ENCODE measurements at regions of chr11 and their contacts with region 1.

Region 1: DNA sequence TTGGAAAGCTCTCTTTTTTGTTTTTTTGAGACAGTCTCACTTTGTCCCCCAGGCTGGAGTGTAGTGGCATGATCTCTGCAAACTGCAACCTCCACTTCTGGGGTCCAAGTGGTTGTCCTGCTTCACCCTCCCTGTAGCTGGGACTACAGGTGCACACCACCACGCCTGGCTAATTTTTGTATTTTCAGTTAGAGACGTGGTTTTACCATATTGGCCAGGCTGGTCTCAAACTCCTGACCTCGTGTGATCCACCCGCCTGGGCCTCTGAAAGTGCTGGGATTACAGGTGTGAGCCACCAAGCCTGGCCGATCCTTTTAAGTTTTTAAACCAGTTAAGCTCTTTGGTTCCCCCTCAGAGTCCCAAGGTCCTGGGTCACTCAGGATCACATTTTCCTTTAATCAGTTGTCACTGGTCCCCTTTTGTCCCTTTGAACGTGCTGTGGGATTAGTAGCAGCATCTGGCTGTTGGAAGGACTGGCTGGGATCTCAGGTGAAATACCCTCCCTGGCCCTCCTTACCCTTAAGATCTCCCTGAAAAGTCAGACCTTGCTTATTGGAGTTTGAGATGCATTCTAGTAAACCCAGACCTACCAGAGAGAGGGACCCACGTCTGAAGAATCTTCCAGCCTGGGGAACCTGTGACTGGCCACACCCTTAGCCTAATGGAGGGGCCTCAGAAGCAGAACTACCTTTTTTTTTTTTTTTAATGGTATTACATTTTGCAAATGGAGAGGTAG is 8.1 kb downstream of the MALAT1 start:
- DNase-seq: no peak
- ATAC-seq: peak; percentile 61
- H3K4me3 ChIP-seq: no peak overlapping the region
- H3K27ac ChIP-seq: peak overlapping the region; percentile 28
- H3K4me1 ChIP-seq: peaks cover 10% of the 10 kb centered on the region; the same call in 1 of the 2 replicates
- H3K27me3 ChIP-seq: no peaks in the 10 kb centered on the region
- CTCF ChIP-seq: no peak
- EP300 ChIP-seq: peak in 1 of 2 experiments; percentile 31; a peak in 1 of 4 replicates
- POLR2A ChIP-seq: peak; percentile 79
- RAD21 ChIP-seq: no peak

Region 2: DNA sequence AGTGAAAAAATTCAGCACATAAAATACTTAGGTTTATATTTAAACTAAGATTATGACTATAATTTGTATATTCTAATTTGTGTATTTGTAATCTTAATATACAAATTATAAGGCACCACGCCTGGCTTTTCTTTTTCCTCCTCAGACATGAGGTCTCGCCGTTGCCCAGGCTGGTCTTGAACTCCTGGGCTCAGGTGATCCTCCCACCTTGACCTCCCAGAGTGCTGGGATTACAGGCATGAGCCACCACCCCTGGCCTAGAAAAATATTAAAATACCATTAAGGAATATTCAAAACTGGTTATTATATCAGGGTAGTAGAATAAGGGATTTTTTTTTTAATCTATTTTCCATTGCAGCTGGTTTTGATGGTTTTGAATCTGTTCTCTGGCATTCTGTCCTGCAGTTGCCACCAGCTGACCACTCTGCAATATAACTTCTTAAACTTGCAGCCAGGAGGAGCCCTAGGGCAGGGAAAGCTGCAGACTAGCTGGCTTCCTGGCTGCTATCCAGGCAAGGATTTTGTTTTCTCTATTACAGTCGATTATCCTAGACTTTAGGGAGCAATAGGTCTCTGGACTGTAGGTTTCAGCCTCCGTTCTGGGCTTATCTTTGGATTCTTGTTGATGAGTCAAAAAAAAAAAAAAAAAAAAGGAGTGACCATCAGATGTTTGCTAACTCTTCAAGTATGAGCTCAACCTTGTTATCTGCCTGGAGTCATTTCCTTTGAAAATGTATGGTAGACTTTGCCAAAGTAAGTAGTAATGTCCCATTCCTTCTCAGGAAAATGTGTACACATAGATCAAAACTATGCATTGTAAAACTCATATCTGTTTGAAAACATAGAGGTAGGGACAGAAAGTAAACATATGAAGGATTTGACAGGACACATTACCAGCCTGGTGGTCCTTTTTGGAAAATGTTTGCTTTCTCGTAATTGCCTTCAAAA is 231.9 kb before region 1 on chr11:
- CTCF ChIA-PET with region 1: interaction called, 11 read pairs
- POLR2A ChIA-PET with region 1: no interaction called
- RAD21 ChIA-PET with region 1: interaction called, 9 read pairs
- SMC1A ChIA-PET with region 1: interaction called, 4 read pairs
- in situ Hi-C with region 1: no loop called
- intact Hi-C with region 1: no loop called
- DNase-seq: no peak
- ATAC-seq: peak; percentile 89
- H3K4me3 ChIP-seq: no peak overlapping the region
- H3K27ac ChIP-seq: no peak overlapping the region
- H3K4me1 ChIP-seq: peaks cover 6% of the 10 kb centered on the region; the same call in 1 of the 2 replicates
- H3K27me3 ChIP-seq: no peaks in the 10 kb centered on the region
- CTCF ChIP-seq: peak; percentile 68 to 94 (median 69)
- EP300 ChIP-seq: no peak
- POLR2A ChIP-seq: no peak
- RAD21 ChIP-seq: peak; percentile 90

Region 3: GRCh38 chr11:65366340-65366773 is 140.6 kb before region 1 on chr11:
- CTCF ChIA-PET with region 1: interaction called, 29 read pairs
- POLR2A ChIA-PET with region 1: interaction called, 6 read pairs
- RAD21 ChIA-PET with region 1: interaction called, 8 read pairs
- SMC1A ChIA-PET with region 1: interaction called, 18 read pairs
- in situ Hi-C with region 1: loop called (anchors 5 kb)
- intact Hi-C with region 1: loop called (anchors 1 kb)
- DNase-seq: no peak
- ATAC-seq: peak; percentile 42
- H3K4me3 ChIP-seq: no peak overlapping the region
- H3K27ac ChIP-seq: no peak overlapping the region
- H3K4me1 ChIP-seq: peaks cover 16% of the 10 kb centered on the region
- H3K27me3 ChIP-seq: no peaks in the 10 kb centered on the region; a peak in 1 of 4 replicates
- CTCF ChIP-seq: peak; percentile 74 to 79 (median 76)
- EP300 ChIP-seq: no peak
- POLR2A ChIP-seq: no peak
- RAD21 ChIP-seq: peak; percentile 94

Region 4: GRCh38 chr11:65382033-65382807 is 124.7 kb before region 1 on chr11 and contains the start of gene SLC25A45:
- CTCF ChIA-PET with region 1: interaction called, 16 read pairs
- POLR2A ChIA-PET with region 1: interaction called, 6 read pairs
- RAD21 ChIA-PET with region 1: interaction called, 8 read pairs
- SMC1A ChIA-PET with region 1: interaction called, 6 read pairs
- in situ Hi-C with region 1: no loop called
- intact Hi-C with region 1: no loop called
- DNase-seq: peak; percentile 84
- ATAC-seq: peak; percentile 86
- H3K4me3 ChIP-seq: peak within 1 kb of the TSS; percentile 90
- H3K27ac ChIP-seq: peak within 1 kb of the TSS; percentile 99
- H3K4me1 ChIP-seq: peaks cover 58% of the 10 kb centered on the region
- H3K27me3 ChIP-seq: no peaks in the 10 kb centered on the region
- CTCF ChIP-seq: peak; percentile 70 to 79 (median 71)
- EP300 ChIP-seq: peak in 1 of 2 experiments; percentile 24; a peak in 1 of 4 replicates
- POLR2A ChIP-seq: peak; percentile 78
- RAD21 ChIP-seq: peak; percentile 74
- polyA plus RNA-seq, gene SLC25A45: 4.1 to 9.7 TPM

Region 5: DNA sequence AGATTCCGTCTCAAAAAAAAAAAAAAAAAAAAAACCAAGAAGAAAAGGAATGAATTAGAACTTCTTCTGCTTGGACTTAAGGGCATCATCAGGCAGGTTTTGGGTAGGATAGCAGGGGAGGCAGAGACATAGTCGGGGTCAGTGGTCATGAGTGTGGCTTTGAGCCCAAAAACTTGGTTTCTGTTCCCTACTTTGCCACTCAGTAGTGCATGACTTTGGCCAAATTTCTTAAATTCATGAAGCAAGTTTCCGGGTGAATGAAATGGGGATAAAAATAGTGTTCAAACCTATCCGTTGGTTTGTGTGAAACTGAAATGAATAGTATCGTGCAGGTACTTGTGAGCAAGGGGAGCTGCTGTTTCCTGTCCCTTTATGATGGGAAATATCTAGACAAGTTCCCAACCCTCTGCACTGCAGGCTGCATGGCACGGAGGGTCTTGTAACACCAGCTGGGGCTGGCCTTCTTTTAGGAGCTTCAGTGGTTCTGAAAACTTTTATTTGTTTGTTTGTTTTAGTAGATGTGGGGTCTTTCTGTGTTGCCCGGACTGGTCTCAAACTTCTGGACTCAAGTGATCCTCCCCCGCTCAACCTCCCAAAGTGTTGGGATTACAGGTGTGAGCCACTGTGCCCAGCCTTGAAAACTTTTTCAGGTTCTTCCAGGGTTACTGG is 66.0 kb before region 1 on chr11:
- CTCF ChIA-PET with region 1: interaction called, 4 read pairs
- POLR2A ChIA-PET with region 1: interaction called, 13 read pairs
- RAD21 ChIA-PET with region 1: interaction called, 3 read pairs
- SMC1A ChIA-PET with region 1: interaction called, 3 read pairs
- in situ Hi-C with region 1: no loop called
- intact Hi-C with region 1: no loop called
- DNase-seq: peak; percentile 98
- ATAC-seq: peak; percentile 69
- H3K4me3 ChIP-seq: no peak overlapping the region
- H3K27ac ChIP-seq: peak overlapping the region; percentile 89
- H3K4me1 ChIP-seq: peaks cover 52% of the 10 kb centered on the region
- H3K27me3 ChIP-seq: no peaks in the 10 kb centered on the region
- CTCF ChIP-seq: no peak
- EP300 ChIP-seq: peak; percentile 81 to 84; a peak in 3 of 4 replicates
- POLR2A ChIP-seq: peak; percentile 47; the same call in 1 of the 2 replicates
- RAD21 ChIP-seq: no peak

Region 6: DNA sequence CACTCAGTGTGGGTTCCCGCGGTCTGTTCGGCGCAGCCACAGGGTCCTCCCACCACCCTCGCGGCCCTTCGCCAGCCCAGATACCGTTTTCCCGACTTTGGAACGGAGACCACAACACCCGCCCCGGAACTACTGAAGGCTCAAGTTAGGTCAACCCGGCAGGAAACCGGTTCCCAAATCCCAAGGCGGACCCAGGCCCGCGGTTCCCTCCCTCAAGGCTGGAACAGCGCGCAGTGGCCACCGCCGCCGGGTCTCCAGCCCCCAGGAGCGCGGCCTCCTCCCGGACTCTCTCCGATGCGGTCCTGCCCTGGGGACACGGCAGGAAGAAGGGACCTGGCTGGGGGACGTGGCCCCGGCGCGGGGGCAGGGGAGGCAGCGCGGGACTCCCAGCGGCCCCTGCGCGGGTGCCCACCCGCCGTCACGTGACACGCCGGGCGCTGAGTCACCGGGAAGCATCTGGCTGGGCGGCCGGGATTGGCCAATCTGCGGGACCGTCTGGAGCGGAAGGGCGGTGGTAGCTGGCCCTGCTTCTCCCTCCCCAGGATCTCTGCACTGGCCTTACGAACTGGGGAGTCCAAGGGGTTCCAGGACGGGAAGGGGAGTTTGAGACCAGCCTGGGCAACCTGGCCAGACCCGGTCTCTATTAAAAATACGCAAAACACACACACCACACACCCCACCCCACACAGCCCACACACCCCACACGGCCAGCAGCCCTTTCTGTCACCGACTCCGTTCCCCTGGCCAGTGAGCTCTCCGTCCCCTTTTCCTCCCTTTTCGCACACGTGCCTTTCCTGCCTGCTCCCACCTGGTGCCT is 29.6 kb before region 1 on chr11:
- CTCF ChIA-PET with region 1: interaction called, 728 read pairs
- POLR2A ChIA-PET with region 1: interaction called, 112 read pairs
- RAD21 ChIA-PET with region 1: interaction called, 208 read pairs
- SMC1A ChIA-PET with region 1: interaction called, 481 read pairs
- in situ Hi-C with region 1: no loop called
- intact Hi-C with region 1: no loop called
- DNase-seq: no peak
- ATAC-seq: peak; percentile 88
- H3K4me3 ChIP-seq: peak overlapping the region; percentile 79
- H3K27ac ChIP-seq: peak overlapping the region; percentile 100
- H3K4me1 ChIP-seq: peaks cover 26% of the 10 kb centered on the region
- H3K27me3 ChIP-seq: no peaks in the 10 kb centered on the region
- CTCF ChIP-seq: no peak
- EP300 ChIP-seq: 0 out of 4 replicates have a peak, but pooled peaks of 1 of the 2 experiments have one; percentile 26
- POLR2A ChIP-seq: peak; percentile 91
- RAD21 ChIP-seq: no peak

Measured in GM12878 (cell line).